Right ventricle myocardium superior (tissue), 1 donor: ENCODE measurements at regions of chr13 and their contacts with region 1.

Region 1: GRCh38 chr13:95660981-95661581 is 15.9 kb upstream of the DNAJC3 start:
- DNase-seq: no peak
- ATAC-seq: no peak

Region 2: DNA sequence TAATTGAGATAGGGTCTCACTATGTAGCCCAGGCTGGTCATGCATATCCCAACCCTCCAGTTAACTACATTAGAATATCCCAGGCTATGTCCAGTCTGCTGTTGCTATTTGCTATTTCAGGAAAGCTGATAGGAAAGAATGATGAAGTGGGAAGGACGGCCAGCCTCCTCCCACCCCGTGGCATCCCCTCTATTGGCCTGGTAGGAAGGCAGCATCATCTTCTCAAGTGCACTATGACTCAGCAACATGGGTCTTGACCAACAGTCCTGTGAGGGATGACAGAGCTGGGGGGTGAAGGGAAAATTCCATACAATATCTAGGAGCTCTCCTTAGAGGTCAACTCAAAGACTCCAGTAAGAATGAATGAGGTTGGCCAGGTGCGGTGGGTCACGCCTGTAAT is 311.8 kb before region 1 on chr13:
- intact Hi-C with region 1: no loop called
- DNase-seq: no peak
- ATAC-seq: no peak

Region 3: DNA sequence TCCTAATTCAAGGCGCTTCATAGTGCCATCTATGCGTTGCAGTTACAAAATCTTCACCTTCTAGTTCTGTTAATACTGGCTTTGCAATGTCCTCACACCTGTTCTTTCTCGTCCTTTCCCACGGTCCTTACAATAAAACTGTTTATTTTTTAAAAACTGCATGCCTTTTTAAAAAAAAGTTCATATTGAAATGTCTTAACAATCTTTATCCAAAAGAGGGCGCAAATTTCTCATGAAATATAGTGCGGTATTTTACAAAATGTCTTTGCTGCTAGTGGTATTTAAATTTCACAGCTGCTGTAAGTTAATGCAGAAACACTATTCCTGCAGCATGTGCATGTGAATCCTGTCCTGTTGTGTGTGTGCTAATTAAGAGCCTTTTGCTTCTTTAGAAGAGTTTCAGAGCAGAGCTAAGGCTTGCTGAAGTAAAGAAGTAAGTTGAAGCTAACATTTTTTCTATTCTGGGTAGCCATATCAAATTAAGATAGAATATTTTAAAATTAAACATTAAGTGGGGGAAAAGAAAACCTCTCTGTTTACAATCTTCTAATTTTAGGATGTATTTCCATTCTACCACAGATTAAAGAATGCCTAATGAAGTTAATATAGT is 124.3 kb before region 1 on chr13:
- intact Hi-C with region 1: loop called (anchors 10 kb)
- DNase-seq: no peak
- ATAC-seq: no peak